ENCODE measurements at regions of chr1 and their contacts with region 1.

Region 1: GRCh38 chr1:37995751-37996345 is 6.0 kb upstream of the SF3A3 start:
- DNase-seq: peak in 1 of 9 donors; percentile 56
- ATAC-seq: no peak
- H3K4me3 ChIP-seq: peak overlapping the region; percentile 17
- H3K4me3 Mint-ChIP-seq: peak overlapping the region in 9 of 10 donors; percentile 6 to 88 (median 76)
- H3K27ac ChIP-seq: peak overlapping the region; percentile 62
- H3K27ac Mint-ChIP-seq: peak overlapping the region in 6 of 9 donors; percentile 65 to 95 (median 87)
- H3K4me1 ChIP-seq: peaks cover 0 to 8% of the 10 kb centered on the region in 2 donors
- H3K4me1 Mint-ChIP-seq: peaks cover 22 to 41% (median 29%) of the 10 kb centered on the region in 7 donors
- H3K27me3 ChIP-seq: no peaks in the 10 kb centered on the region
- H3K27me3 Mint-ChIP-seq: no peaks in the 10 kb centered on the region

Region 2: GRCh38 chr1:36831181-36831810 is 1164.6 kb before region 1 on chr1:
- CTCF ChIA-PET with region 1: no interaction called
- POLR2A ChIA-PET with region 1: no interaction called
- intact Hi-C with region 1: no loop called
- DNase-seq: no peak
- ATAC-seq: no peak
- H3K4me3 ChIP-seq: no peak overlapping the region
- H3K4me3 Mint-ChIP-seq: no peak overlapping the region
- H3K27ac ChIP-seq: no peak overlapping the region
- H3K27ac Mint-ChIP-seq: no peak overlapping the region
- H3K4me1 ChIP-seq: no peaks in the 10 kb centered on the region
- H3K4me1 Mint-ChIP-seq: peaks cover 0 to 2% (median 0%) of the 10 kb centered on the region in 7 donors
- H3K27me3 ChIP-seq: no peaks in the 10 kb centered on the region
- H3K27me3 Mint-ChIP-seq: peaks cover 0 to 37% (median 14%) of the 10 kb centered on the region in 5 donors

Region 3: GRCh38 chr1:37978541-37978940 is 17.3 kb before region 1 on chr1:
- CTCF ChIA-PET with region 1: no interaction called
- POLR2A ChIA-PET with region 1: no interaction called
- intact Hi-C with region 1: no loop called
- DNase-seq: no peak
- ATAC-seq: no peak
- H3K4me3 ChIP-seq: no peak overlapping the region
- H3K4me3 Mint-ChIP-seq: no peak overlapping the region
- H3K27ac ChIP-seq: no peak overlapping the region
- H3K27ac Mint-ChIP-seq: no peak overlapping the region
- H3K4me1 ChIP-seq: no peaks in the 10 kb centered on the region
- H3K4me1 Mint-ChIP-seq: peaks cover 0 to 10% (median 2%) of the 10 kb centered on the region in 7 donors
- H3K27me3 ChIP-seq: no peaks in the 10 kb centered on the region
- H3K27me3 Mint-ChIP-seq: no peaks in the 10 kb centered on the region

Region 4: GRCh38 chr1:38018864-38019343 is 23.1 kb after region 1 on chr1:
- CTCF ChIA-PET with region 1: interaction called, 14 read pairs
- POLR2A ChIA-PET with region 1: interaction called, 4 read pairs
- intact Hi-C with region 1: loop called in 1 of 2 experiments (anchors 1 kb)
- DNase-seq: peak in 5 of 9 donors; percentile 17 to 49 (median 39)
- ATAC-seq: peak; percentile 68
- H3K4me3 ChIP-seq: no peak overlapping the region
- H3K4me3 Mint-ChIP-seq: no peak overlapping the region
- H3K27ac ChIP-seq: no peak overlapping the region
- H3K27ac Mint-ChIP-seq: peak overlapping the region in 2 of 9 donors; percentile 18 to 48
- H3K4me1 ChIP-seq: peaks cover 0 to 4% of the 10 kb centered on the region in 2 donors
- H3K4me1 Mint-ChIP-seq: peaks cover 5 to 28% (median 16%) of the 10 kb centered on the region in 7 donors
- H3K27me3 ChIP-seq: no peaks in the 10 kb centered on the region
- H3K27me3 Mint-ChIP-seq: no peaks in the 10 kb centered on the region

Region 5: DNA sequence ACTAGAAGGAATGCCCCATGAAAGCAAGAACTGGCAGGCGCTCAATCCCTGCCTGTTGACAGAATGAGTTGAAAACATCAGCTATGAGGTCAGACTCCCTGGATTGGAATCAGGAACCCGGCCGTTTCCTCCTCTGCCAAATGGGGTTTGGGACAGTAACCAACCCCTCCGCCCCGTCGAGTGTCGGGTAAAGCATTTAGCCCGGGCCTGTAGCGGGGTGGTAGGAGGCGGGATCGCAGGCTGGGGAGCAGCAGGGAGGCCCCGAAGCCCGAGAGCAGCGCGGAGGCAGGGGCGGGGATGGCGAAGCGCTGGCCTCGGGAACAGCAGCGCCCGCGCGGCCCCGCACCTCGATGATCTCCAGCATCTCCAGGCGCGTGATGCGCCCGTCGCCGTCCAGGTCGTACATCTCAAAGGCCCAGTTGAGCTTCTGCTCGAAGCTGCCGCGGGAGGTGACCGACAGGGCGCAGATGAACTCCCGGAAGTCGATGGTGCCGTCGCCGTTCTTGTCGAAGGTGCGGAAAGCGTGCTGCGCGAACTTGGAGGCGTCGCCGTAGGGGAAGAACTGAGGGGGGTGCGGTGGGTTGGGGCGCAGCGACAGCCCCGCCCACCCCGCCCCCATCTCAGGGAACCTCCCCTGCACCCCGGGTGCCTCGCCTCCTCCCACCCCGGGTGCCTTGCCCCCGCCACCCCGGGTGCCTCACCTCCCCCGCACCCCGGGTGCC is 1687.9 kb after region 1 on chr1:
- CTCF ChIA-PET with region 1: no interaction called
- POLR2A ChIA-PET with region 1: no interaction called
- intact Hi-C with region 1: loop called in 1 of 2 experiments (anchors 5 kb)
- DNase-seq: peak in 6 of 9 donors; percentile 39 to 73 (median 57)
- ATAC-seq: peak; percentile 75
- H3K4me3 ChIP-seq: peak overlapping the region; percentile 37
- H3K4me3 Mint-ChIP-seq: peak overlapping the region in 8 of 10 donors; percentile 23 to 70 (median 58)
- H3K27ac ChIP-seq: peak overlapping the region; percentile 60
- H3K27ac Mint-ChIP-seq: peak overlapping the region in 6 of 9 donors; percentile 16 to 75 (median 36)
- H3K4me1 ChIP-seq: peaks cover 0 to 36% of the 10 kb centered on the region in 2 donors
- H3K4me1 Mint-ChIP-seq: peaks cover 14 to 55% (median 35%) of the 10 kb centered on the region in 7 donors
- H3K27me3 ChIP-seq: no peaks in the 10 kb centered on the region
- H3K27me3 Mint-ChIP-seq: peaks cover 0 to 46% (median 26%) of the 10 kb centered on the region in 5 donors

Measured in naive thymus-derived CD4-positive, alpha-beta T cell (primary cell).